Esophagus squamous epithelium (tissue), 5 donors: ENCODE measurements at regions of chr15 and their contacts with region 1.

Region 1: GRCh38 chr15:90165659-90166421 is 35.3 kb upstream of the SEMA4B start:
- DNase-seq: peak; percentile 11
- H3K4me3 ChIP-seq: no peak overlapping the region
- H3K27ac ChIP-seq: peak overlapping the region; percentile 84 to 93 (median 87)
- H3K4me1 ChIP-seq: peaks cover 21 to 75% (median 33%) of the 10 kb centered on the region in 3 donors
- H3K27me3 ChIP-seq: no peaks in the 10 kb centered on the region
- CTCF ChIP-seq: no peak
- POLR2A ChIP-seq: no peak

Region 2: GRCh38 chr15:90211431-90212143 is 45.7 kb after region 1 on chr15:
- intact Hi-C with region 1: loop called (anchors 2 kb)
- DNase-seq: no peak
- H3K4me3 ChIP-seq: peak overlapping the region in 2 of 4 donors; percentile 34 to 42
- H3K27ac ChIP-seq: peak overlapping the region; percentile 93 to 96 (median 94)
- H3K4me1 ChIP-seq: peaks cover 46 to 100% (median 51%) of the 10 kb centered on the region in 3 donors
- H3K27me3 ChIP-seq: no peaks in the 10 kb centered on the region
- CTCF ChIP-seq: no peak
- POLR2A ChIP-seq: no peak

Region 3: GRCh38 chr15:90376789-90377188 is 210.9 kb after region 1 on chr15:
- intact Hi-C with region 1: no loop called
- DNase-seq: no peak
- H3K4me3 ChIP-seq: no peak overlapping the region
- H3K27ac ChIP-seq: peak overlapping the region in 2 of 4 donors; percentile 34 to 69
- H3K4me1 ChIP-seq: peaks cover 0 to 37% (median 12%) of the 10 kb centered on the region in 3 donors
- H3K27me3 ChIP-seq: no peaks in the 10 kb centered on the region
- CTCF ChIP-seq: no peak
- POLR2A ChIP-seq: no peak

Region 4: DNA sequence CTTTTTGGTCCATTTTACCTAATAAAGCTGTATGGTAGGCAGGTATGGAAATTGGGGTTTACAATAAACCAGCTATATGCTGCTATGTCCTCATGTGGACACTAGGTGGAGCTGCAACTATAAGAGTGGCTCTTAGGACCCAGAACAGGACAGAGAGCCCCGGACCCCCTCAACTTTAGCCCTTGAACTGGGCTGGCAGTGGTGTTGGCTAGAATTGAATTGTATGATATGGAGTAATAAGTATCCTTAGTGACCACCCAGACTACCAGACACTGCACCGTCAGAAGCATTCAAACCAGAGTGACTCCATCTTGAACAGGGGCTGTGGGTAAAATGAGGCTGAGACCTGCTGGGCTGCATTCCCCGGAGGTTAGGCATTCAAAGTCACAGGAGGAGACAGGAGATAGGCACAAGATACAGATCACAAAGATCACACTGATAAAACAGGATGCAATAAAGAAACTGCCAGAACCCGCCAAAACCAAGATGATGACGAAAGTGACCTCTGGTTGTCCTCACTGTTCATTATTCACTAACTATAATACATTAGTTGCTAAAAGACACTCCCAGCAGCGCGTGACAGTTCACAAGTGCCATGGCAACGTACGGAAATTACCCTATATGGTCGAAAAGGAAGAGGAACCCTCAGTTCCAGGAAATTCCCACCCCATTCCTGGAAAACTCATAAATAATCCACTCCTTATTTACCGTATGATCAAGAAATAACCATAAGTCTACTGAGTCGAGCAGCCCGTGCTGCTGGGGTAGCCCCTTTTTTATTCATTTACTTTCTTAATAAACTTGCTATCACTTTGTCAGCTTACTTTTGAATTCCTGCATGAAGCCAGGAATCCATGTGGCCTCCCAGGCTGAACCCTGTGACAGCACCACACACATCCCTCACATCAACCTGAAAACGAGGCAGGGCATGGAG is 482.6 kb after region 1 on chr15:
- intact Hi-C with region 1: no loop called
- DNase-seq: peak; percentile 19
- H3K4me3 ChIP-seq: peak overlapping the region in 1 of 4 donors; percentile 12
- H3K27ac ChIP-seq: peak overlapping the region in 3 of 4 donors; percentile 61 to 71 (median 70)
- H3K4me1 ChIP-seq: peaks cover 8 to 22% (median 10%) of the 10 kb centered on the region in 3 donors
- H3K27me3 ChIP-seq: no peaks in the 10 kb centered on the region
- CTCF ChIP-seq: peak; percentile 67 to 92 (median 90)
- POLR2A ChIP-seq: peak in 1 of 4 donors; percentile 5

Region 5: GRCh38 chr15:90829942-90830440 is 664.2 kb after region 1 on chr15:
- intact Hi-C with region 1: no loop called
- DNase-seq: no peak
- H3K4me3 ChIP-seq: no peak overlapping the region
- H3K27ac ChIP-seq: peak overlapping the region; percentile 37 to 70 (median 60)
- H3K4me1 ChIP-seq: peaks cover 0 to 13% (median 0%) of the 10 kb centered on the region in 3 donors
- H3K27me3 ChIP-seq: no peaks in the 10 kb centered on the region
- CTCF ChIP-seq: no peak
- POLR2A ChIP-seq: peak in 1 of 4 donors; percentile 41